ENCODE measurements at regions of chr17 and their contacts with region 1.

Region 1: DNA sequence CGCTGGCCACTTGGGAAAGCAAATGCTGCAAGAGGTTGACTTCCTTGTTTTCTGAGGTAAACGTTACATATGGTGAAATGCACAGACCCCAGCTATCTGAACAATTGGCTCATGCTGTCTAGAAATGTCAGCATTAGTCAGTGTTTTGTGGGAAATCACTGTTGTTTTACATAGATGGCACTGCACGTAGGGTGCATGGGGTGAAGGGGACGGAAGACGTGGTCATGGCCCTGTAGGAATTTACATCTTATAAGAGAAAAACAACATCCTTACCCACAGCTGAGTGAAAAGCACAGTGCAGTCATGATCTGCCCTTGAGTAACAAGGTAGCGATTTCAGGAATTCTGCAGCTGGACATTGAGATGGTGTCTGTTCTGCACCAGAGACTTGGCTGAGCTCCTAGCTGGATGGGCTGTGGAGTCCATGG is 15.2 kb downstream of the RPTOR start:
- DNase-seq: peak in 1 of 2 donors; percentile 32
- H3K4me3 ChIP-seq: no peak overlapping the region
- CTCF ChIP-seq: no peak
- POLR2A ChIP-seq: no peak

Region 2: GRCh38 chr17:80519091-80519781 is 40.6 kb before region 1 on chr17:
- intact Hi-C with region 1: loop called (anchors 2 kb)
- DNase-seq: no peak
- H3K4me3 ChIP-seq: no peak overlapping the region
- CTCF ChIP-seq: no peak
- POLR2A ChIP-seq: no peak